ENCODE measurements at regions of chr16 and their contacts with region 1.

Region 1: DNA sequence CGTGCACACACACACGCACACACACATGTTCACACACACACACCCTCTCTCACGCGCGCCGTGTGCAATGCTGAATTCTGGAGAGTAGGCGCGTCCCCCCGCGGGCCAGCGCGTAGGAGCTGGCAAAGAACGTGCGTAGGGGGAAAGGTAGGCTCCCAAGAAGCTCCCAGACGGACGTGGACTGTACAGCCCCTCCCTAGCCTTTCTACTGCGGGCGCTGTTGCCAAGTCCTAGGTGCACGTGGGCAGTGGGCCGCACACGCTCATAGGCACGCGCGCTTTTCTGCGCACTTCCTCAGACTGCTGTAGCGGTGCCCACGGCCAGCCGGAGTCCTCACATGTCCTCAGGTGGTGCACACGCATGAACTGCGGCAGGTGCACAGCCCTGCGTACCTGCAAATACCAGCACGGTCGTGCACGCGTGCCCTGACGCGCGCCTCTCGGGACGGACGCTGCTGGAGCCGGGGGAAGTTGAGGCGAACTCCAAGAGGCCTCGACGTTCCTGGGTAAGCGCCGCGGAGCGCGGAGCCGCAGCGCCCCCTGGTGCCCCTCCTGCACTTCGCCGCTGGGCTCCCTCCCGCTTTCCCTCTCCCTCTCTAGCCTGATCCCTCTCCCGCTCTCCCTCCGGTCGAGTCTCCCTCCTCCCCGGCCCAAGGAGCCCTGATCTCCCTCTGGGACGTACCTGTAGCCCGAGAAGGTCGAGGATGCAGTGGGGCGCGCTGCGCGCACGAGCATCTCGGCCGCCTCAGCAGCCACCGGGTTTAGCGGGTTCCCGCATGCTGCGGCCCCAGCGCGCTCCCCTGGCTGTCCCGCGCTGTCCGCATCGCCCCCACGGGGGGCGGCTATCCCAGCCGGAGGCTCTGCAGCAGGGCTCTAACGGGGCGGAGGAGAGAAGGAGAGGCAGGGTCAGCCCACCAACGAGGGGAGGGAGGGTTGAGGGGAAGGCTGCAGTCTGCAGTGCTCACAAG is 749 bp downstream of the GRIN2A start:
- DNase-seq: peak; percentile 45 to 70
- ATAC-seq: peak; percentile 88 to 95 (median 90)
- H3K4me3 ChIP-seq: peak overlapping the region in 8 of 10 donors; percentile 15 to 49 (median 41)
- H3K27ac ChIP-seq: no peak overlapping the region
- H3K4me1 ChIP-seq: peaks cover 3 to 30% (median 22%) of the 10 kb centered on the region in 9 donors
- H3K27me3 ChIP-seq: peaks cover 11 to 91% (median 78%) of the 10 kb centered on the region in 7 donors
- CTCF ChIP-seq: peak; percentile 89 to 98 (median 92)

Region 2: DNA sequence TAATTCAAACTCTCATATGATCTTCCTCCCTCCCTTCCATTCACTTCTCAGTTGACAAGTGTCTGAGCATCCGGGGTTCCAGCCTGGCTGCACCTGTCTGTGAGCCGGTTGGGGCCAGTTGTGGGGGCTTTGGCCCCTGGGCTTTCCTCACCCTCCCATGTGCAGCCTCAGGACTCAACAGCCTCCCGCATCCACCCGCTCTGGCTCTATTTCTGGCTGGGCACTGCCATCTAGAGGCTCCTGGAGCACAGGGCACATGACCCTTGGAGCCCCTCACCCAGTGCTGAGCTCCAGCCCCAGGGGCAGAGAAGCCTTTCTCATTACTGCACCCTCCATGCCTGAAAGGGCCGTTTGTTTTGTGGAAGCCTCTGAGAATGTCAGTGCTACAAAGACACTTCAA is 1046.7 kb before region 1 on chr16:
- intact Hi-C with region 1: loop called in 1 of 10 experiments (anchors 5 kb)
- DNase-seq: peak; percentile 27 to 37
- ATAC-seq: peak; percentile 44 to 78 (median 64)
- H3K4me3 ChIP-seq: no peak overlapping the region
- H3K27ac ChIP-seq: no peak overlapping the region
- H3K4me1 ChIP-seq: peaks cover 0 to 17% (median 6%) of the 10 kb centered on the region in 9 donors
- H3K27me3 ChIP-seq: no peaks in the 10 kb centered on the region
- CTCF ChIP-seq: peak; percentile 9 to 66 (median 57)

Region 3: DNA sequence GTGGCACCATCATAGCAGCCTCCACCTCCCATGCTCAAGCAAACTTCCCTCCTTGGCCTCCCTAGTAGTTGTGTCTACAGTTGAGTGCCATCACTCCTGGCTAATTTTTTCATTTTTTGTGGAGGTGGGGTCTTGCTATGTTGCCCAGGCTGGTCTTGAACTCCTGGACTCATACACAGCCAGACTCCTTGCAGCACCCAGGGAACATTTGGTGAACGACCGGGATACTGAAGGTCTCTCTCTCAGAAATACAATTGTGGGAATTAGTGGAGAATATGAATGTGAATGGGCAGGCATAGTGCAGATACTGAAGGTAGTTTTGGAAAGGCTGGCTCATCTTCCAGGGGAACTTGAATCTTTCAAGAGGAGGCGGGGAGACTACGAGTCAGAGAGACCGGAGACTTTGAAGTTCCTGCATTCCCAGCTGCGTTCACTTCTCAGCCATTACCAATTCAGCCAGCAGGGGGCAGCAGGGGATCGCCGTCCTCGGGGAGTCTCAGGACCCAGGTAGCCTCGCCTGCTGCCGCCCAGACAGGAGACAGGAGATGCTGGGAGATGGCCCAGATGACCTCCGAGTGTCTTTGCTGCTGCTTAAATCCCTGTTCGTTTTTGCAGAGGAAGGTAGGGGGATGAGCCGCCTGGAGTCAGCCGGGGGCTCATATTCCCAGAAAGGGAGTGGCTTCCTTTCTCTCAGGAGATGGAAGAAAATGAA is 1021.5 kb before region 1 on chr16:
- intact Hi-C with region 1: loop called in 7 of 10 experiments (anchors 5 to 10 kb)
- DNase-seq: peak in 1 of 2 donors; percentile 12
- ATAC-seq: peak; percentile 42 to 77 (median 58)
- H3K4me3 ChIP-seq: no peak overlapping the region
- H3K27ac ChIP-seq: no peak overlapping the region
- H3K4me1 ChIP-seq: peaks cover 0 to 6% (median 0%) of the 10 kb centered on the region in 9 donors
- H3K27me3 ChIP-seq: peaks cover 0 to 23% (median 8%) of the 10 kb centered on the region in 7 donors
- CTCF ChIP-seq: peak; percentile 31 to 84 (median 72)

Region 4: DNA sequence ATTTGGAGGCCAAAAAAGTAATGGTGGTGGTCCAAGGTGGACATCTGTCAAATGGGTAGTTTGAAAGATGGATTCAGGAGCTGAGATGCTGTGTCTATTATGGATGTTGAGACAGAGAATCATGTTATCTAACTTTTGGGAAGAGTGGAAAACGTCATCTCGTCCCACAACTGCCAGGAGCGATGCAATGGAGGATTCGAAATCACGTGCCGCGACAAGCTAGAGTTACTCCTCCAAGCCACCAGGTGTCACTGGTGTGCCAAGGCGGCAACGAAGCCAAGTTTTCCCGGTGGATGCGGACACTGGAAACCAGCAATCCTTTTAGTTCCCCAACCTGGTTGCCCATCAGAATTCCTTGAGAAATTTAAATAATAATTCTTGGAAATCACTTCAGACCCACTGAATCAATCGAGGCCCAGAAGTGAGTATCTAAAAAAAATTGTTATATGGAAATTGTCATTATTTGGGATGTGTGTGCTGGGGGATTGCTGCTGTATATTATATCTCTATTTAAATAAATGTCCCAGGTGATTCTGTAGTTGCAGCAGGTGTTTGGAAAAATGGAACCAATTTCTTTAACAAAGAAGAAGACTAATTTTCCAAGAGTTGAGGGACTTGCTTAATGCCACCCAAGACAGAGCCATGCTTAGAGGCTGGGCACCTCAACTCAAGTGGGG is 883.9 kb before region 1 on chr16:
- intact Hi-C with region 1: loop called in 1 of 10 experiments (anchors 5 kb)
- DNase-seq: peak; percentile 9 to 29
- ATAC-seq: peak in 1 of 8 donors; percentile 47
- H3K4me3 ChIP-seq: no peak overlapping the region
- H3K27ac ChIP-seq: no peak overlapping the region
- H3K4me1 ChIP-seq: no peaks in the 10 kb centered on the region
- H3K27me3 ChIP-seq: peaks cover 0 to 4% (median 0%) of the 10 kb centered on the region in 7 donors
- CTCF ChIP-seq: peak; percentile 34 to 66 (median 55)

Region 5: DNA sequence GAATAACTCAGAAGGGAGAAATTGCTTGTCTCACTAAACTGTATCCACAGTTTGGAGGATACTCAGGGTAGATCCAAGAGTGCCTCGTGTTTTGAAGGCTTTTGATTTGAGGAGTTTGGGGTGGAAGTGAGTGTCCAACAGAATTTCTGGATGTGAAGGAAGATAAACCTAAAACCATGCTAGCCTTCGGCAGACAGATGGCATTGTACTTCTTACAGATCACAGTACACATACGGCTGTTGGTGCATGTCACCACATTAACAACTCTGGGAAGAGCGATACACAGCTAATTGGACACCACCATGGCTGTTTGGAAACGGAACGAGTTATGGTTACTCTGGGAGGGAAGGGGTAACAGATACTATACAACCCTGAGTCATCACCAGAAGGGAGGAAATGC is 419.6 kb before region 1 on chr16:
- intact Hi-C with region 1: loop called in 1 of 10 experiments (anchors 5 kb)
- DNase-seq: no peak
- ATAC-seq: no peak
- H3K4me3 ChIP-seq: no peak overlapping the region
- H3K27ac ChIP-seq: no peak overlapping the region
- H3K4me1 ChIP-seq: peaks cover 0 to 7% (median 0%) of the 10 kb centered on the region in 9 donors
- H3K27me3 ChIP-seq: no peaks in the 10 kb centered on the region
- CTCF ChIP-seq: peak in 1 of 9 donors; percentile 10

Region 6: GRCh38 chr16:10039220-10040096 is 142.0 kb before region 1 on chr16:
- intact Hi-C with region 1: loop called in 1 of 10 experiments (anchors 5 kb)
- DNase-seq: peak; percentile 17 to 18
- ATAC-seq: peak in 3 of 8 donors; percentile 66 to 87 (median 70)
- H3K4me3 ChIP-seq: peak overlapping the region in 9 of 10 donors; percentile 5 to 41 (median 18)
- H3K27ac ChIP-seq: no peak overlapping the region
- H3K4me1 ChIP-seq: peaks cover 0 to 8% (median 0%) of the 10 kb centered on the region in 9 donors
- H3K27me3 ChIP-seq: peaks cover 0 to 38% (median 20%) of the 10 kb centered on the region in 7 donors
- CTCF ChIP-seq: peak in 8 of 9 donors; percentile 6 to 54 (median 32)

Region 7: DNA sequence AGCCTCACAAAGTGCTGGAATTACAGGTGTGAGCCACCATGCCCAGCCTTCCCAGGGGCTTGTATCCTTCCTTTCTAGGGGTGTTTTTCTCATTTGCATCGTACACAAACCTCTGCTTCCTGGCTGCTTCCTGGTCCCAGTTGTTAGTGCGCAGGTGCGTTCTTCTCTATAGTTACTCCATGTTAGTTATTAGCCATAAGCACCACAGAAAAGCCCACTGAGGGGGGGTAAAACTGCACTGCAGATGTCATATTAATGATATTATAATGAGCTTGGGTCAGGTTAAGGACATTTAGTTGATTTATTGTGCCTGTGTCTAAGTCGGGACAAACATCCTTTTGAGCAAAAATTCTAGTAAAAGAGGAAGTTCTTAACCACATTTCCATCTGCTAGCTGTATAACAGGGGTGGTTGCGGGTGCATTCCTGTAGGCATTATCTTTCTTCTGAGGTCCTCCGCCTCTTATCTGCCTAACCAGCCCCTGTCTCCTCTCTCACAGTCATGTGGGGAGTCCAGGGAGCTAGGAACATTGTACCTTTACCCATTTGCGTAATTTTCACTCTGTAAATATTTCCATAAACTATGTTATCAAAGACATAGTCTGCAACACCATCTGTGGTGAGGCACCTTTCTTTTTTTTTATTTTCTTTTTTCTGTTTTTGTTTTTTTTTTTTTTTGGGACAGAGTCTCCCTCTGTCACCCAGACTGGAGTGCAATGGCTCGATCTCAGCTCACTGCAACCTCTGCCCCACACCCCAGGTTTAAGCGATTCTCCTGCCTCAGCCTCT is 180.8 kb after region 1 on chr16:
- intact Hi-C with region 1: no loop called
- DNase-seq: no peak
- ATAC-seq: no peak
- H3K4me3 ChIP-seq: no peak overlapping the region
- H3K27ac ChIP-seq: no peak overlapping the region
- H3K4me1 ChIP-seq: no peaks in the 10 kb centered on the region
- H3K27me3 ChIP-seq: no peaks in the 10 kb centered on the region
- CTCF ChIP-seq: no peak

Region 8: GRCh38 chr16:10373556-10373955 is 192.1 kb after region 1 on chr16:
- intact Hi-C with region 1: no loop called
- DNase-seq: no peak
- ATAC-seq: no peak
- H3K4me3 ChIP-seq: no peak overlapping the region
- H3K27ac ChIP-seq: no peak overlapping the region
- H3K4me1 ChIP-seq: no peaks in the 10 kb centered on the region
- H3K27me3 ChIP-seq: no peaks in the 10 kb centered on the region
- CTCF ChIP-seq: no peak

Measured in heart right ventricle (tissue), 16 donors.